Spleen (tissue), 13 donors: ENCODE measurements at regions of chr4 and their contacts with region 1.

Region 1: GRCh38 chr4:109815151-109816081 is at the start of gene GAR1:
- DNase-seq: peak; percentile 96
- H3K4me3 ChIP-seq: peak within 1 kb of the TSS; percentile 76 to 89 (median 86)
- H3K27ac ChIP-seq: peak within 1 kb of the TSS; percentile 80 to 94 (median 89)
- H3K4me1 ChIP-seq: peaks cover 6 to 43% (median 28%) of the 10 kb centered on the region in 6 donors
- H3K27me3 ChIP-seq: no peaks in the 10 kb centered on the region
- CTCF ChIP-seq: peak in 1 of 11 experiments; percentile 17
- POLR2A ChIP-seq: peak in 1 of 3 donors; percentile 24
- total RNA-seq, gene GAR1: 4.3 to 13.2 (median 12.0) TPM

Region 2: GRCh38 chr4:108649863-108650211 is 1165.6 kb before region 1 on chr4:
- intact Hi-C with region 1: loop called (anchors 10 kb)
- DNase-seq: no peak
- H3K4me3 ChIP-seq: peak overlapping the region; percentile 64 to 95 (median 86)
- H3K27ac ChIP-seq: peak overlapping the region in 7 of 8 donors; percentile 84 to 94 (median 92)
- H3K4me1 ChIP-seq: peaks cover 22 to 48% (median 34%) of the 10 kb centered on the region in 6 donors
- H3K27me3 ChIP-seq: no peaks in the 10 kb centered on the region
- CTCF ChIP-seq: no peak
- POLR2A ChIP-seq: no peak

Region 3: DNA sequence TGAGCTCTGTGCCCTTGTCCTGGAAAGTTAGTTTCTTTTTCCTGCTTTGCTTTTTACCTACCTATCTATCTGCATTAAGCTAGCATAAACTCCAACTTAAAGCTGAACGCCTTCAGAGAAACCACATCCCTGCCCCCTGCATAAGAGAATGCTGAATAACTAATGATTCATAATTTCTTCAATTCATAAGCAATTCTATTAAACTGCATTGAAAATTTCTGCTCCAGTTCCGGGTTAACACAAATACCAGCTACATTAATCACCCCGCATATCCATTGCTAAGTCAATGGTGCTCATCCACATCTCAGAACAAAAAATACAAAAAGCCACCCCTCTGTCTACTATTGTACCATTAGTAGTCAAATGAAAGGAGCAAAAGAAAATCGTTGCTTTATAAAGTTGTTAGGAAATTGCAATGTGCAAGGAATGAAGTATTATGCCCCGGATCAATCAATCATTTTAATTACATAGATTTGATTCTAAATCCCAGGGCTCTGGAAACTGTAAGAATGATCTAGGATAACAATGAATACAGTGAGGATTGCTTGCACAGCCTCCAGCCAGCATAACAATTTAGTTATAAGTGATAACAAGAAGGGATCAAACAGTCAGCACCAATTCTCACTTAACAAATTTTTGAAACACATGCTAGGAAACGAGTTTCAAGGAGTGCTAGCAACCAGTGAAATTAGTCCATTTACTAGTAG is 276.2 kb after region 1 on chr4:
- intact Hi-C with region 1: no loop called
- DNase-seq: no peak
- H3K4me3 ChIP-seq: no peak overlapping the region
- H3K27ac ChIP-seq: no peak overlapping the region
- H3K4me1 ChIP-seq: peaks cover 0 to 9% (median 0%) of the 10 kb centered on the region in 6 donors
- H3K27me3 ChIP-seq: no peaks in the 10 kb centered on the region
- CTCF ChIP-seq: no peak
- POLR2A ChIP-seq: no peak